ENCODE measurements at regions of chr11 and their contacts with region 1.

Region 1: GRCh38 chr11:119168471-119169281 is at the start of gene NLRX1:
- DNase-seq: peak; percentile 30 to 91
- H3K4me3 ChIP-seq: peak within 1 kb of the TSS; percentile 61 to 95
- H3K27ac ChIP-seq: peak within 1 kb of the TSS; percentile 97 to 100
- H3K4me1 ChIP-seq: peaks cover 0 to 2% of the 10 kb centered on the region in 2 donors
- H3K27me3 ChIP-seq: no peaks in the 10 kb centered on the region
- CTCF ChIP-seq: peak; percentile 88 to 96 (median 95)
- total RNA-seq, gene NLRX1: 35.9 TPM

Region 2: GRCh38 chr11:119101759-119102423 is 66.8 kb before region 1 on chr11 and contains the start of gene DPAGT1:
- intact Hi-C with region 1: loop called (anchors 5 kb)
- DNase-seq: peak; percentile 70 to 97
- H3K4me3 ChIP-seq: peak within 1 kb of the TSS; percentile 75 to 89
- H3K27ac ChIP-seq: peak within 1 kb of the TSS; percentile 92
- H3K4me1 ChIP-seq: peaks cover 20 to 25% of the 10 kb centered on the region in 2 donors
- H3K27me3 ChIP-seq: no peaks in the 10 kb centered on the region
- CTCF ChIP-seq: no peak
- total RNA-seq, gene DPAGT1: 61.9 TPM

Region 3: GRCh38 chr11:119144825-119145486 is 23.7 kb before region 1 on chr11:
- intact Hi-C with region 1: loop called (anchors 2 kb)
- DNase-seq: peak in 1 of 2 donors; percentile 79
- H3K4me3 ChIP-seq: no peak overlapping the region
- H3K27ac ChIP-seq: no peak overlapping the region
- H3K4me1 ChIP-seq: peaks cover 0 to 10% of the 10 kb centered on the region in 2 donors
- H3K27me3 ChIP-seq: no peaks in the 10 kb centered on the region
- CTCF ChIP-seq: peak; percentile 34 to 69 (median 67)

Region 4: GRCh38 chr11:119196833-119197483 is 28.3 kb after region 1 on chr11:
- intact Hi-C with region 1: loop called (anchors 2 kb)
- DNase-seq: peak in 1 of 2 donors; percentile 79
- H3K4me3 ChIP-seq: no peak overlapping the region
- H3K27ac ChIP-seq: no peak overlapping the region
- H3K4me1 ChIP-seq: no peaks in the 10 kb centered on the region
- H3K27me3 ChIP-seq: no peaks in the 10 kb centered on the region
- CTCF ChIP-seq: peak; percentile 51 to 73 (median 68)

Region 5: GRCh38 chr11:119306373-119306890 is 137.8 kb after region 1 on chr11:
- intact Hi-C with region 1: loop called (anchors 2 kb)
- DNase-seq: peak; percentile 66 to 91
- H3K4me3 ChIP-seq: peak overlapping the region in 1 of 2 donors; percentile 42
- H3K27ac ChIP-seq: peak overlapping the region; percentile 98 to 99
- H3K4me1 ChIP-seq: peaks cover 11 to 43% of the 10 kb centered on the region in 2 donors
- H3K27me3 ChIP-seq: no peaks in the 10 kb centered on the region
- CTCF ChIP-seq: no peak

Region 6: DNA sequence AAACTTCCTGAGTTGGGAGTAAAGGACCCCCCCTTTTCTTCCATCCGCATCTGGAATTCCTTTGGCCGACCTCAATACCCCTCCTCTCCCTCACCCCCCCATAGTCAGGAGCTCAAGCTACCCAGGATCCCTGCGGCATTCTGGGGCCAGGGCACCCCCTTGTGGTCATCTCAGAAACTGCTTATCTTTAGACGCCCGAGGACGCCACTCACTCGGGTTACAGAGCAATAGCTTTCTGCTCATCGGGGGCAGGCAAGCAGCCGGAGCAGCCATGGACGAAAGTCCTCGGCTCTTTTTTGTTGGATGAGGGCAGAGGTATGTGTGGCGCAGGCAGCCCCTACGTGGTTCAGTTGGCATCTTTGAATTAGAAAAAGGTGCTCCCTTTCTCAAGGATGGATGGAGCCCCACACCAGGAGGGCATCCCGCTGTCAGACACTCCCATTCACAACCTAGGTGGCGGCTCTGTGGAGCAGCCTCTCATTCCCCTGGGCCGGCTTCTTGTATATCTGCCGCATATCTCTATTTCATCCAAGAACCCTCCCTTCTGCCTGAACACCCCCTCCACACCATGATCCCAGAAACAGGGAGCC is 169.7 kb after region 1 on chr11:
- intact Hi-C with region 1: loop called (anchors 1 kb)
- DNase-seq: peak in 1 of 2 donors; percentile 87
- H3K4me3 ChIP-seq: peak overlapping the region in 1 of 2 donors; percentile 94
- H3K27ac ChIP-seq: peak overlapping the region; percentile 88 to 96
- H3K4me1 ChIP-seq: peaks cover 13 to 38% of the 10 kb centered on the region in 2 donors
- H3K27me3 ChIP-seq: no peaks in the 10 kb centered on the region
- CTCF ChIP-seq: peak; percentile 75 to 88 (median 86)

Region 7: GRCh38 chr11:119533921-119534736 is 365.5 kb after region 1 on chr11:
- intact Hi-C with region 1: no loop called
- DNase-seq: peak in 1 of 2 donors; percentile 71
- H3K4me3 ChIP-seq: no peak overlapping the region
- H3K27ac ChIP-seq: no peak overlapping the region
- H3K4me1 ChIP-seq: no peaks in the 10 kb centered on the region
- H3K27me3 ChIP-seq: no peaks in the 10 kb centered on the region
- CTCF ChIP-seq: peak; percentile 30 to 78 (median 55)